ENCODE measurements at regions of chr6 and their contacts with region 1.

Region 1: DNA sequence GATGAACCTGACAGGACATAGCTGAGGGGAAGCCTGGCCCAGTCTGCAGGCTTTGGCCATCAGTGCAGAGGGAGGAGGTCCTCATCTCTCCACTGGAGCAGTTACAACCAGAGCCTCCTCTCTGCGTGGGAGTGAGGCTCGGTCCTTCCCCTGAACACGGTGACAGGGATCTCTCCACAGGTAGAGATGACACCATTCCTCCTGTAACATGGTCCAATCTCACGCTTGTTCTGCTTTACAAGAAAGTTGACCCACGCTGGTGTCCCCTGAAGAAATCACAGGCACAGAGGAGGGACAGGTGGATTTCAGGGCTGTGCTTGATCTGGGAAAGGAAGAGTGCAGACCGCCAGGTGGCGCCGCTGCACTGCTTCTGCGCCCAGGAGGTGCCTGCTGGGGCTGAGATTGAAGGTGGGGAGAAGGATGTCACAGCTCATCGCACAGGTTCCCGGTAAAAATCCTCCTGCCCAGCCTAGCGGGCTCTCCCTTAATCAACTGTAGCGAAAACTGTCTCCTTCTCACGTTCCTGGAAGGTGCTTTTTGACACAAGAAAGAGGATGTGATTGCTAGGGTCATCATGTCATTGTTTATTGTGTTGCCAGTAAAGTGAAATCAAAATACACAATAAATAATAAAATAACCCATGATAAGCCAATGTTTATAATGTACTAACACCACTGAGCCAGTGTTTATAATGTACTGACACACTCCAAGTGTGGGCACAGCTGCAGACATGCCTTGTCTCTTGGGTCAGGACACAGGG is 20.4 kb downstream of the HLA-G start:
- DNase-seq: peak; percentile 82 to 86
- H3K4me3 ChIP-seq: no peak overlapping the region
- H3K27ac ChIP-seq: no peak overlapping the region
- H3K4me1 ChIP-seq: peaks cover 0 to 7% of the 10 kb centered on the region in 2 donors
- H3K27me3 ChIP-seq: no peaks in the 10 kb centered on the region
- CTCF ChIP-seq: peak; percentile 70 to 96 (median 91)
- POLR2A ChIP-seq: no peak

Region 2: DNA sequence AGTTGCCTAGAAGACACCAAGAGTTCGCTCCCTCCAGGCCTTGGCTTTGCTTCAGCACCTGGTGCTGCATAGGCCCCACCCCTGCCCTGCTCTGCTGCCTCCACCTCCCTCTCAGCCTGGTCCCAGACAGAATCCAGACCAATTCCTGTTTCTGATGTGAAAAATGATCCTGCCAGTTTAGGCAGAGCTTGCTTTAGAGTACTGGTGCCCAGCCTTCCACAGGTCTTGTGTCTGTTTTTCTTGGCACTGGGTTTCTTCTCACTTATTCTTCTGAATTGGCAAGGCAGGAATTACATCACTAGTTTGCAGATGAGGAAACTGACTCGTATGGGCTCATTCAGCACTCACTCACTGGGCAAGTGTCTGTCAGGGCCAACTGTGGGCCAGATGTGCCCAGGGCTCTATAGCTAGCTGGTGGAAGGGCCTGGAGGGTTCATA is 147.3 kb after region 1 on chr6:
- intact Hi-C with region 1: loop called (anchors 10 kb)
- DNase-seq: no peak
- H3K4me3 ChIP-seq: no peak overlapping the region
- H3K27ac ChIP-seq: no peak overlapping the region
- H3K4me1 ChIP-seq: no peaks in the 10 kb centered on the region
- H3K27me3 ChIP-seq: no peaks in the 10 kb centered on the region
- CTCF ChIP-seq: no peak
- POLR2A ChIP-seq: no peak

Region 3: GRCh38 chr6:30013291-30013922 is 165.4 kb after region 1 on chr6:
- intact Hi-C with region 1: loop called (anchors 5 kb)
- DNase-seq: peak; percentile 5 to 11
- H3K4me3 ChIP-seq: no peak overlapping the region
- H3K27ac ChIP-seq: no peak overlapping the region
- H3K4me1 ChIP-seq: no peaks in the 10 kb centered on the region
- H3K27me3 ChIP-seq: no peaks in the 10 kb centered on the region
- CTCF ChIP-seq: peak in 5 of 6 experiments; percentile 35 to 89 (median 61)
- POLR2A ChIP-seq: no peak